CD8-positive, alpha-beta T cell (primary cell): ENCODE measurements at regions of chr12 and their contacts with region 1.

Region 1: DNA sequence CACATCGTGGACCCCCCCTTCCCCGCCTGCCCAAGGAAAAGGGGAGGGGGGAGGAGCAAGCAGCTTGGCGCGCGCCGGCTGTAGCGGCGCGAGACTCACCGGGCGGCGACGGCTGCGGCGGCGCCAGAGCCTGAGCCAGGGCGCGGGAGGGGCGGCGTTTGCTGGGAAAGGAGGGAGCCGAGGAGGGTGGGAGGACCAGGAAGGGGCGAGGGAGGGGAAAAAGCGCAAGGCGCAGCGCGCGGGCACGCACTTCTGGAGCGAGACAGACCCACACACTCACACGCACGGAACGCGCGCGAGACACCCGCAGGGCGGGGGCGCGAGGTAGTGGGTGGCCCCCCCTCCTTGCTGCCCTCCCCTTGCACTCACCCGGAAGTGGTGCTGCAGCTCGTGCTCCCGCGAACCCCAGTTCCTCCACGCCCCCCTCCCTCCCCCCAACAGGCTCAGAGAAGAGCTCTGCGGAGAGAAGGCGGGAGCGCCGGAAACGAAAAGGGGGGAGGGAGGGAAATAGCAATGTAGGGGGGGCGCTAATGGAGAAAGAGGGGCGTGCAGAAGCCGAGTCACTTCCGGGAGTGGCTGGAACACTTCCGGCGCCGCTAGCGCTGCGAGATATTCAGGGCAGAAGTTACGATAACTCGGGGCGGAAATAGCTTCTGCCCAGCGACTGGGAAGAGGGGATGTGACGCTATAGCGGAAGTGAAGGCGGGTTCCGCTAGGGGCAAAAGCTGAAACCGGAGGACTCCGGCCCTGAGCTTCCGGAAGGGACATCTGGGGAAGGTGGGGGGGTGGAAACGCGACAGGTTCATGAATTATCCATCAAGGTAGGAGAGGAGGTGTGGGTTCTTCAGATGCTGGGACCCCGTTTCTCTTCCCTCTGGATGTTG is at the start of gene ZNF384:
- DNase-seq: peak; percentile 89 to 99 (median 96)
- ATAC-seq: peak; percentile 78
- H3K4me3 ChIP-seq: peak within 1 kb of the TSS; percentile 60 to 77
- H3K4me3 Mint-ChIP-seq: peak within 1 kb of the TSS; percentile 94
- H3K27ac ChIP-seq: peak within 1 kb of the TSS; percentile 89 to 91
- H3K27ac Mint-ChIP-seq: peak within 1 kb of the TSS; percentile 98
- H3K4me1 ChIP-seq: peaks cover 33% of the 10 kb centered on the region
- H3K4me1 Mint-ChIP-seq: peaks cover 55% of the 10 kb centered on the region
- H3K27me3 ChIP-seq: no peaks in the 10 kb centered on the region
- H3K27me3 Mint-ChIP-seq: no peaks in the 10 kb centered on the region
- CTCF ChIP-seq: no peak
- total RNA-seq, gene ZNF384: 61.8 to 63.8 TPM

Region 2: GRCh38 chr12:5442251-5443006 is 1246.8 kb before region 1 on chr12:
- CTCF ChIA-PET with region 1: no interaction called
- POLR2A ChIA-PET with region 1: no interaction called
- intact Hi-C with region 1: no loop called
- DNase-seq: no peak
- ATAC-seq: no peak
- H3K4me3 ChIP-seq: no peak overlapping the region
- H3K4me3 Mint-ChIP-seq: no peak overlapping the region
- H3K27ac ChIP-seq: no peak overlapping the region
- H3K27ac Mint-ChIP-seq: no peak overlapping the region
- H3K4me1 ChIP-seq: no peaks in the 10 kb centered on the region
- H3K4me1 Mint-ChIP-seq: no peaks in the 10 kb centered on the region
- H3K27me3 ChIP-seq: no peaks in the 10 kb centered on the region
- H3K27me3 Mint-ChIP-seq: peaks cover 34% of the 10 kb centered on the region
- CTCF ChIP-seq: no peak

Region 3: GRCh38 chr12:6493497-6494257 is 195.6 kb before region 1 on chr12 and contains the start of gene NCAPD2:
- CTCF ChIA-PET with region 1: no interaction called
- POLR2A ChIA-PET with region 1: interaction called, 6 read pairs
- intact Hi-C with region 1: loop called in 1 of 2 experiments (anchors 1 kb)
- DNase-seq: peak; percentile 88 to 98 (median 94)
- ATAC-seq: peak; percentile 80
- H3K4me3 ChIP-seq: peak within 1 kb of the TSS; percentile 86 to 93
- H3K4me3 Mint-ChIP-seq: peak within 1 kb of the TSS; percentile 96
- H3K27ac ChIP-seq: peak within 1 kb of the TSS; percentile 72 to 93
- H3K27ac Mint-ChIP-seq: peak within 1 kb of the TSS; percentile 98
- H3K4me1 ChIP-seq: peaks cover 26% of the 10 kb centered on the region
- H3K4me1 Mint-ChIP-seq: peaks cover 41% of the 10 kb centered on the region
- H3K27me3 ChIP-seq: no peaks in the 10 kb centered on the region
- H3K27me3 Mint-ChIP-seq: no peaks in the 10 kb centered on the region
- CTCF ChIP-seq: no peak
- total RNA-seq, gene NCAPD2: 11.7 to 13.4 TPM

Region 4: DNA sequence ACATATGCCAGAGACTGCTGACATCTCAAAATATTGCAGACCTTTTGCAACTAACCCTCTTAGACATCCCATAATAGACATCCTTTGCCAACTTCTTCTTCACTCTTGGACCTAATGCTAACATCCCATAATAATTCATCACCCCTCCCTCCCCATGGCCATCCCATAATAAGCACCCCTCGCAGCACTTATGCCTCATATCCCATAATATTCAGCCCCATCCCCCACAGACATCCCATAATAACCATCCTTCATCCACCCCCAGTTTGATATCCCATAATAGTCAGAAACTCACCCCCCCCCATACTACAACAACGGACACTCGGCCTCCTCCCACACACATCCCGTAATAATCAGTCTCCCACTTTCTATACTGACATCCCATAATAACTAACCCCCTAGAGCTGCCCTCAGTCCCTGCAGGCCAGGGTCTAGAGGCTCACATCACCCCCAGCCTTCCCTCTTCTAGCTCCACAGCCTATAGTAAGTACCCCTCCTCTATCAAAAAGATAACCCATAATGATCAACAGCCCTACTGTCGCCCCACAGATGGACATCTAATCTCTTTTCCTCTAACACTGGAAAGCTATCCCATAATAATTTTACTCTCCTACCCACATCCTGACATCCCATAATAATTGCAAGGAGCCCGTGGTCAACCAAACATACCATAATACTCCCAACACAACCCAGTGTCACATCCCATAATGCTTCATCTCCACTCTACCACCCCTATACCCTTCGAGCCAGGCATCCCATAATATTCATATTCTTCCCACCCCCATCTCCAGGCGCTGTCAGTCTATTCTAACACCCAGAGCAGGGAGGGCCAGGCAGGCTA is 81.3 kb before region 1 on chr12:
- CTCF ChIA-PET with region 1: interaction called, 4 read pairs
- POLR2A ChIA-PET with region 1: interaction called, 10 read pairs
- intact Hi-C with region 1: loop called (anchors 1 kb)
- DNase-seq: peak in 8 of 9 experiments; percentile 38 to 92 (median 67)
- ATAC-seq: peak; percentile 45
- H3K4me3 ChIP-seq: no peak overlapping the region
- H3K4me3 Mint-ChIP-seq: no peak overlapping the region
- H3K27ac ChIP-seq: peak overlapping the region; percentile 76 to 96
- H3K27ac Mint-ChIP-seq: no peak overlapping the region
- H3K4me1 ChIP-seq: peaks cover 63% of the 10 kb centered on the region
- H3K4me1 Mint-ChIP-seq: peaks cover 48% of the 10 kb centered on the region
- H3K27me3 ChIP-seq: no peaks in the 10 kb centered on the region
- H3K27me3 Mint-ChIP-seq: no peaks in the 10 kb centered on the region
- CTCF ChIP-seq: no peak

Region 5: DNA sequence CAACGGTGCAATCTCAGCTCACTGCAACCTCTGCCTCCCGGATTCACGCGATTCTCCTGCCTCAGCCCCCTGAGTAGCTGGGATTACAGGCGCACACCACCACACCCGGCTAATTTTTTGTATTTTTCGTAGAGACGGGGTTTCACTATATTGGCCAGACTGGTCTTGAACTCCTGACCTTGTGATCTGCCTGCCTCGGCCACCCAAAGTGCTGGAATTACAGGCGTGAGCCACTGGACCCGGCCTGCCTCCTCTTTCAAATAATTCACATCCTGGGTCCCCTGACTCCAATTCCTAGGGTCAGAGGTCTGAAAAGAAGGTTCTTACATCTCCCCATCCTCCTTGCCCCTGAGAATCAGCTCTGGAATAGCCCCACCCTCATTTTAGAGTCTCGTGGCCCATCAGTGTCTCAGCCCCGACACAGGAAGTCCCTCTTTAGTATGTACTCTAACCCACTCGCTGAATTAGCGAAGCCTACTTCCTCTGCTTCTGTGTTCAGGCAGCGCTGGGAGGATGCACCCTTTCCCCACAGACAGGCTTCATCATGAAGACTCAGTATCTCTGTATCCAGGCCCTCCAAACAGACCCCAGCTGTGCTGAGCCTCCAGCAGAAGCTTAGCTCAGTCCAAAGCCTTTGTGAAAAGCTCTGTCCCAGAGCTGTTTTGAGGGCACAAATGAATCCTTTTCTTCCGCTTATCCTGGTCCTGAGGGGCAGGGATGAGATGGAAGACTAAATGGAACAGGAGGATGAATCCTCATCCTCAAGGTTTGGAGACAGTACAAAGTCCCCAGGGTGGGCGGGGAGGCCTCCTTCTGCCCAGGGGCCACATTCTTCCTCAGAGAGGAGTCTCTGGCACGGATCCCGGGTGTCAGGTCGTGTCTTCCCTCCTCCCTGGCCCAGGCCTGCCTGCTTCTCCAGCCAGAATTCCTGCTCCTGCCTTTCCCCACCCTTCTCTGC is 56.9 kb before region 1 on chr12:
- CTCF ChIA-PET with region 1: interaction called, 4 read pairs
- POLR2A ChIA-PET with region 1: interaction called, 12 read pairs
- intact Hi-C with region 1: no loop called
- DNase-seq: peak in 8 of 9 experiments; percentile 46 to 83 (median 66)
- ATAC-seq: peak; percentile 57
- H3K4me3 ChIP-seq: peak overlapping the region; percentile 58 to 68
- H3K4me3 Mint-ChIP-seq: peak overlapping the region; percentile 83
- H3K27ac ChIP-seq: peak overlapping the region; percentile 60 to 87
- H3K27ac Mint-ChIP-seq: peak overlapping the region; percentile 98
- H3K4me1 ChIP-seq: peaks cover 70% of the 10 kb centered on the region
- H3K4me1 Mint-ChIP-seq: peaks cover 66% of the 10 kb centered on the region
- H3K27me3 ChIP-seq: no peaks in the 10 kb centered on the region
- H3K27me3 Mint-ChIP-seq: no peaks in the 10 kb centered on the region
- CTCF ChIP-seq: no peak

Region 6: GRCh38 chr12:6723607-6724396 is 34.6 kb after region 1 on chr12 and contains the start of gene COPS7A:
- CTCF ChIA-PET with region 1: interaction called, 9 read pairs
- POLR2A ChIA-PET with region 1: interaction called, 58 read pairs
- intact Hi-C with region 1: loop called (anchors 1 kb)
- DNase-seq: peak; percentile 83 to 98 (median 97)
- ATAC-seq: peak; percentile 85
- H3K4me3 ChIP-seq: peak within 1 kb of the TSS; percentile 59 to 68
- H3K4me3 Mint-ChIP-seq: peak within 1 kb of the TSS; percentile 83
- H3K27ac ChIP-seq: peak within 1 kb of the TSS; percentile 67 to 92
- H3K27ac Mint-ChIP-seq: peak within 1 kb of the TSS; percentile 94
- H3K4me1 ChIP-seq: peaks cover 19% of the 10 kb centered on the region
- H3K4me1 Mint-ChIP-seq: peaks cover 27% of the 10 kb centered on the region
- H3K27me3 ChIP-seq: no peaks in the 10 kb centered on the region
- H3K27me3 Mint-ChIP-seq: no peaks in the 10 kb centered on the region
- CTCF ChIP-seq: peak; percentile 28
- total RNA-seq, gene COPS7A: 11.0 to 11.1 TPM

Region 7: GRCh38 chr12:6873094-6874014 is 184.1 kb after region 1 on chr12 and contains the start of gene SPSB2:
- CTCF ChIA-PET with region 1: interaction called, 4 read pairs
- POLR2A ChIA-PET with region 1: interaction called, 11 read pairs
- intact Hi-C with region 1: no loop called
- DNase-seq: peak; percentile 96 to 100 (median 99)
- ATAC-seq: peak; percentile 90
- H3K4me3 ChIP-seq: peak within 1 kb of the TSS; percentile 89 to 99
- H3K4me3 Mint-ChIP-seq: peak within 1 kb of the TSS; percentile 90
- H3K27ac ChIP-seq: peak within 1 kb of the TSS; percentile 77 to 83
- H3K27ac Mint-ChIP-seq: peak within 1 kb of the TSS; percentile 90
- H3K4me1 ChIP-seq: peaks cover 44% of the 10 kb centered on the region
- H3K4me1 Mint-ChIP-seq: peaks cover 47% of the 10 kb centered on the region
- H3K27me3 ChIP-seq: no peaks in the 10 kb centered on the region
- H3K27me3 Mint-ChIP-seq: no peaks in the 10 kb centered on the region
- CTCF ChIP-seq: no peak
- total RNA-seq, gene SPSB2: 2.6 to 3.0 TPM